Mucosa of descending colon (tissue), 3 donors: ENCODE measurements at regions of chr19 and their contacts with region 1.

Region 1: DNA sequence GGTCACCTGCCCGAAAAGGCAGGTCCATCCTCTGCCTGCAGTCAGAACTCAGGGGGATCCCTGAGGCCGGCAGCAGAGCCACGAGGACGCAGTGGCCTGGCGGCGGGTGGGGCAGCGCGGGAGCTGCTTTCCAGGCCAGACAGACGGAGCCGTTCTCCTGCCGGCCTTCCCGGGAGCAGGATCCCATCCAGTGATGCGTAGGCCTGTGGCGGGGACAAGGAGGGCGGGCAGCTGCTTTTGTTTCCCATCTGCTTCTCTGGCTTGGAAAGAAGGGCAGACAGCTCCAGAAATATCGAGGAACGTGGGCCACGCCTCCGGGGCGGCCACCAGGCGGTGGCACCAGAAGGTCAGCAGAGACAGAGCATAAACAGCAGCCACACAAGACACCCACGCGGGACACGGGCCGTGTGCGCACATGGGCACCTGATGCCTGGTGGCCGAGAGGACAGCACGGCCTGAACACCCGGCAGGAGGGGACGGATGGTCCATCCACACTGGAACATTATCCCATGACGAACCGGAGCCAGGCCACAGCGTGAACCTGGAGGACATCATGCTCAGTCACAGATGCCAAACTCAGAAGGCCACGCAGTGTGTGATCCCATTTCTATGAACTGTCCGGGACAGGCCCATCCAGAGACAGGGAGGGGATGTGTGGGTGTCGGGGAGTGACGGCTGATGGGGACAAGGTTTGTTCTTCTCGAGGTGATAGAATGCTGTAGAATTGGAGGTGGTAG is 13.9 kb upstream of the MKNK2 start:
- DNase-seq: peak in 2 of 3 donors; percentile 47 to 62
- ATAC-seq: no peak
- H3K4me3 ChIP-seq: no peak overlapping the region
- H3K4me1 ChIP-seq: peaks cover 44% of the 10 kb centered on the region
- CTCF ChIP-seq: no peak

Region 2: DNA sequence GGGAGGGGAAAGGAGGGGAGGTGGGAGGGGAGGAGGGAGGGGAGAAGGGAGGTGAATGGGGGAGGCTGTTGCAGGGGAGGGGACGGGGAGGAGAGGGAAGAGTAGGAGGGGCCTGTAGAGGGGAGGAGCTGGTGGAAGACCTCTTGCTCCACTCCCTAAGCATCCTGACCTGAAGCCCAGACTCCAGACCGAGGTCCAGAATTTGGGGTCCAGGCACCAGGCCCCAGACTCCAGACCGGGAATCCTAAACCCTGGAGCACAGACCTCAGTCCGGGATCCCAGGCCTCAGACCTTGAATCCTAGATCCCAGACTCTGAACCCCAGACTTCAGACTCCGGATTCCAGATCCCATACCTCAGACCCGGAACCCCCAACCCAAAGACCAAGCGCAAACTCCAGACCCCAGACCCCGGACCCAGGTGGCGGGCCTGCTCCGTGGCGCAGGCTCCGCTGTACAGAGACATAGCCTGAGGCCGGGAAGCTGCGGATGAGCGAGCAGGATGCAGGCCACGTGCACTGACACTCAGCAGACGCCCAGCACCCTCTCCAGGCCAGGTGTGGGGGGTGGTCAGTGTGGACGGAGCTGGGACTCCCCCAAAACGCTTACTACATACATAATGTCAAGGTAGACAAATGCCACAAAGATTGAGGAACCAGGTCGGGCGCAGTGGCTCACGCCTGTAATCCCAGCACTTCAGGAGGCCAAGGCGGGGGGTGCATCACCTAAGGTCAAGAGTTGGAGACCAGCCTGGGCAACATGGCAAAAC is 48.7 kb before region 1 on chr19:
- intact Hi-C with region 1: loop called (anchors 5 kb)
- DNase-seq: peak; percentile 74 to 83 (median 80)
- ATAC-seq: peak; percentile 88
- H3K4me3 ChIP-seq: no peak overlapping the region
- H3K4me1 ChIP-seq: peaks cover 5% of the 10 kb centered on the region
- CTCF ChIP-seq: no peak

Region 3: GRCh38 chr19:2021453-2022140 is 43.4 kb before region 1 on chr19:
- intact Hi-C with region 1: loop called (anchors 5 kb)
- DNase-seq: no peak
- ATAC-seq: peak; percentile 80
- H3K4me3 ChIP-seq: no peak overlapping the region
- H3K4me1 ChIP-seq: no peaks in the 10 kb centered on the region
- CTCF ChIP-seq: no peak